Heart left ventricle (tissue), 16 donors: ENCODE measurements at regions of chr3 and their contacts with region 1.

Region 1: DNA sequence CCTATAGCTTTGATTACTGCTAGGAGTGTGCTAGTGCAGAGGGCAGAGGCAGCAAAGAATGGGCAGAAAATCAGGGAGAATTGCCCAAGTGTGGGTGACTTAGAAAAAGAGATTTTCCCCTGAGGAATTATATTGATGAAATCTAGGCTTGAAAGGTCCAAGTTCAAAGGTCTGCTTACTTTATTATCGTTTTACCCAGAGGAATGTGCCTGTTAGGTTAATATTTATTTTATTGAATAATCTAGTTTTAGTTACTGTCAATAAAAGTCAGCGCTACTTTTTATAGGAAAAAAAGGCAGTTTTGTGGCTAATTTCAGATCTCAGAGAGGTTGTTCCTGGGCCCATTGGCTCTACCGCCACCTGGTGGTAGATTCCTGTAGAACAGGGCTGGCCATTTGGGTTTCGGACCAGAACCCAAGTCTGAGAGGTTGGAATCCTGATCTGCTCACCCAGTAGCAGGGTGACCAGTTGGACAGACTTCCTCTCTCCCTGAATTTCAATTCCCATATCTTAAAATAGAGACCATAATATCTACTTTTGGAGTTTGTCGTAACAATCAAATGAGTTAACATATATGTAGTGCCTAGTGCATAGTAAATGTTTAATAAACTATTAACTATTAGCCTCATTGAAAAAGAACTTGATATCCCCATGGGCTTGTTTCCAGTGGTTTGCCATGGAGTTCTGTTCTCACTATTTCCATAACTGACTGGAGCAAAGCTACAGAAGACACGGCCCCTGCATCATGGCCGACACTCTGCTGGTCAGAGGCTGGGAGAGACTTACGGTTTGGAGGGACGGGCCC is 62.7 kb upstream of the ZNF148 start:
- DNase-seq: peak in 4 of 5 donors; percentile 30 to 36 (median 34)
- ATAC-seq: peak in 3 of 4 donors; percentile 36 to 56 (median 55)
- H3K4me3 ChIP-seq: no peak overlapping the region
- H3K27ac ChIP-seq: no peak overlapping the region
- H3K4me1 ChIP-seq: no peaks in the 10 kb centered on the region
- H3K27me3 ChIP-seq: no peaks in the 10 kb centered on the region
- CTCF ChIP-seq: peak; percentile 88 to 99 (median 96)
- POLR2A ChIP-seq: no peak

Region 2: DNA sequence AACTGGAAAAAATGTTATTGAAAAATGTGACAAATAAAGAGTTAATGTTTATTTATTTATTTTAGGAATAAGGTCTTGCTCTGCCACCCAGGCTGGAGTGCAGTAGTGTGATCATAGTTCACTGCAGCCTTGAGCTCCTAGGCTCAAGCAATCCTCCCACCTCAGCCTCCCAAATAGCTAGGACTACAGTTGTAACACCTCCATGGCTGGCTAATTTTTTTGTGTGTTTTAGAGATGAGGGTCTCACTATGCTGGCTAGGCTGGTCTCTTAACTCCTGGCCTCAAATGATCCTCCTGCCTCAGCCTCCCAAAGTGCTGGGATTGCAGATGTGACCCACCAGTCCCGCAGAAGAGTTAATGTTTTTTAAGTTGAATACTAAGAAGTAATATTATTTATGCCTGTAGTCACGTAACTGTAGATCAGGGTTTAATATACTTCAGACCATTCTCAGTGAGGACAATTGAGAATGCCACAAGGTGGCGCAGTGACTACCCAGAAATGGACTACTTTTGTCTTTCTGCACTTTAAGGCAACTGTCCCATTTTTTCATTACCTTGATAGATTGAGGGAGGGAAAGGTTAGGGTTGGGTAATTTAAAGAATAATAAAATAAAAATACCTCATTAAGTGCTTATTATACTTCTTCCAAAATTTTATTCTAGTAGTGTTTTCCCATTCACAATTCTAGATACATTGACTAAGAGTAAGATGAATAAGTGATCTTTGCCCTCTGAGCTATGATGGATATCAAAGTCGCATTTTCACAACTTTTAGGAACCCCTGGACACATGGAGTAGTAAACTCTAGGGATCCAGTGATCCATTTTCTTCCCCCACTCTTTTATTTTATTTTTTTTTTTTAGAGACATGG is 509.3 kb before region 1 on chr3:
- intact Hi-C with region 1: loop called (anchors 1 to 10 kb)
- DNase-seq: peak; percentile 50 to 79 (median 60)
- ATAC-seq: peak in 2 of 4 donors; percentile 68 to 76
- H3K4me3 ChIP-seq: no peak overlapping the region
- H3K27ac ChIP-seq: no peak overlapping the region
- H3K4me1 ChIP-seq: peaks cover 0 to 11% (median 0%) of the 10 kb centered on the region in 12 donors
- H3K27me3 ChIP-seq: no peaks in the 10 kb centered on the region
- CTCF ChIP-seq: peak; percentile 61 to 87 (median 75)
- POLR2A ChIP-seq: no peak

Region 3: GRCh38 chr3:124935264-124935663 is 502.6 kb before region 1 on chr3:
- intact Hi-C with region 1: loop called in 1 of 10 experiments (anchors 5 kb)
- DNase-seq: no peak
- ATAC-seq: no peak
- H3K4me3 ChIP-seq: no peak overlapping the region
- H3K27ac ChIP-seq: no peak overlapping the region
- H3K4me1 ChIP-seq: no peaks in the 10 kb centered on the region
- H3K27me3 ChIP-seq: peaks cover 0 to 5% (median 0%) of the 10 kb centered on the region in 9 donors
- CTCF ChIP-seq: no peak
- POLR2A ChIP-seq: no peak

Region 4: DNA sequence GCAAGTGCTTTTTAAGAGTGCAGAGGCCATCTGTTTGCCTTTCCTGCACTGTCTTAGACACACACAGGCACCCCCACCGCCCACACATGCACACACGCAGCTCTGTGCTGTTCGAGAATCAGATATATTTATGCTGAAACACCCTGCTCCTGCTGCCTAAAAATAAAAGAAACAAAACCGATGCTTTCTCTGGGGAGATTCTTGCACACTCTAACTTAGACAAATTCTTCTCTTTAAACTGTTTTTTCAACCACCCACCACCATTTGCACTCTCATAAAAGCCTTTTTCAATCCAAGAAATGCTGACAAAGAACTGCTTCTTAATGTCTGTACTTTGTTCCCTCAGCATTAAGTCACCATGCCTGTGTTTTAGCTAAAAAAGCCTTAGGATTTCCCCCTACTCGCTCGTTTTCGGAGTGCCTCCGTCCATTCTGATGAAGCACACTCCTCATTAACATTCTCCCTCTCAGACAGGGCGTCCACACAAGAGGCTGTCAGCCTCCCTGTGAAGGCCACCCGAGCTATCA is 251.5 kb before region 1 on chr3:
- intact Hi-C with region 1: loop called in 2 of 10 experiments (anchors 10 kb)
- DNase-seq: no peak
- ATAC-seq: peak in 1 of 4 donors; percentile 46
- H3K4me3 ChIP-seq: no peak overlapping the region
- H3K27ac ChIP-seq: no peak overlapping the region
- H3K4me1 ChIP-seq: peaks cover 0 to 4% (median 0%) of the 10 kb centered on the region in 12 donors
- H3K27me3 ChIP-seq: no peaks in the 10 kb centered on the region
- CTCF ChIP-seq: no peak
- POLR2A ChIP-seq: no peak

Region 5: DNA sequence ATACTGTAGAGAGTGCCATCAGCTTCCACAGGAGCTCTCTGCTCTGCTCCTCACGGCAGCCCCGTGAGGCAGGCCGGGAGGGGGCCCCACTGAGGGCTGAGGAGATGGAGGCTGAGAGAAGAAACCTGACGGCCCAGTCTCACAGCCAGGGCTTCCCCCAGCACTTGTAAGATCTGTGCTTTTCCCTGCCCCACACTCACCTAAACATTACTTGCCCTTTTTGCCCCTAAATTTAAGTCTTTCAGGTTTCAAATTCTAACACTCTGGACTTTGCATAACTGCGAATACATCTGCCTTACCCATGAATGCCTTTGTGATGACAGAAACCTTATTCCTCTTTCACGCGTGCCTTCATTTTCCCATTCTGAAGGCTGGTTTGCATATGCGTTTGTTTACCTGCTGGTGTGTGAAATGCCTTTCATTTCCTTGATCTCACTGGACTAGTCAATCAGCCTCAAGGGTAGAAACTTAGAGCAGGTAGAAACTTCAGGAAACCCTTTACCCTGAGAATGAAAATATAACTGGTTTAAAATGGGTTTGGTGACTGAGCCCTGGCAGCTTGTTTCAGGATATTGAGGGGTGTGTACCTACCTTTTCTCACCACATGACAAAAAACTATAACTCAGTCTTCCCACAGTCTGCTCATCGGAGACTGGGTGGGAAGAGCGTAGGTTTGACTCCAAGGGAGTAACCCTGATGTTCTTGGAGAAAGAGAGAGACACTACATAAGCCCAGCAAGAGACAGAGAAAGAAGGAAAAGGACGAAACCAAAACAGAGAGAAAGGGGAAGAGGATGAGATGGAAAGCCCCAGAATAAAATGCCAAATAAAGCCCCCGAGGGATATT is 245.4 kb before region 1 on chr3:
- intact Hi-C with region 1: loop called in 2 of 10 experiments (anchors 10 kb)
- DNase-seq: no peak
- ATAC-seq: no peak
- H3K4me3 ChIP-seq: no peak overlapping the region
- H3K27ac ChIP-seq: no peak overlapping the region
- H3K4me1 ChIP-seq: no peaks in the 10 kb centered on the region
- H3K27me3 ChIP-seq: no peaks in the 10 kb centered on the region
- CTCF ChIP-seq: no peak
- POLR2A ChIP-seq: no peak